Testis (tissue), 5 donors: ENCODE measurements at regions of chr10 and their contacts with region 1.

Region 1: GRCh38 chr10:88932539-88933256 is 19.9 kb downstream of the ACTA2 start:
- DNase-seq: peak; percentile 69
- H3K4me3 ChIP-seq: no peak overlapping the region
- H3K27ac ChIP-seq: peak overlapping the region in 1 of 2 donors; percentile 69
- H3K4me1 ChIP-seq: peaks cover 9% of the 10 kb centered on the region
- H3K27me3 ChIP-seq: no peaks in the 10 kb centered on the region
- CTCF ChIP-seq: peak; percentile 78 to 95 (median 93)
- POLR2A ChIP-seq: no peak

Region 2: DNA sequence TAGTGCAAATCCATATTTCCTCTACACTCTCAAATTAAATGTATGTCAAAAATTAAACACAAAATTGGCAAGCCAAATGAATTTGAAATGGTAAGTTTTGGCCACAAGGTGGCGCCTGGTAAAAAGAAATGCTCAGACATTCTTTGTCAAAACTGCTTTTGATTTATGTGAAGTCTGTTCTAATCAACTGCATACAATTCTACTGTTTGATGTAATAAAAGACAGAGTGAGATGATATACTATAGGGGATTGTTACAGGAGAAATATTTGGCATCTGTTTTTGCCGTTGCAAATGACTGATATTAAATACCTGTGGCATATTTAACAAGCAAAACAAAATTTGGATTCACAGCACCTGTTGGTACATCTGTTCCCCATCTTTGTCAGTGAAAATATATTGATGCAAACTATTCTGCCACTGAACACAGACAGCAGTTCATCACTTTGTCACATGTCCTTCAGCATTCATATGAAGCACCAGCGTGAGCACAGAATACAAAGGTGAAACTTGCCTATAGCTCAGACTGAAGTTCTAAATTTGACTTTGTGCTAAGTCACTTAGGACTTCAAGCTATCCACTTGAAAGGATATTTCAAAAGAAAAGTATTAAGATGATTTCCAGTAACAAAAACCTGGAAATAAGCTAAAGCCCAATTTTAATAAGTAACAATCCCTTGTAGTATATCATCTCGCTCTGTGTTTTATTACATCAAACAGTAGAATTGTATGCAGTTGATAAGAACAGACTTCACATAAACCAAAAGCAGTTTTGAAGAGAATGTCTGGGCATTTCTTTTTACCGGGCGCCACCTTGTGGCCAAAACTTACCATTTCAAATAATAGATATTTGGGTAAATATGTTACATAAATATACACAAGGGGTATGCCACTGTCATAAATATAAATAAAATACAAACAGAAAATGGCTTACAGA is 284.6 kb after region 1 on chr10:
- intact Hi-C with region 1: loop called (anchors 5 kb)
- DNase-seq: peak; percentile 75
- H3K4me3 ChIP-seq: no peak overlapping the region
- H3K27ac ChIP-seq: peak overlapping the region in 1 of 2 donors; percentile 38
- H3K4me1 ChIP-seq: peaks cover 4% of the 10 kb centered on the region
- H3K27me3 ChIP-seq: no peaks in the 10 kb centered on the region
- CTCF ChIP-seq: peak; percentile 84 to 94 (median 86)
- POLR2A ChIP-seq: no peak